H1 (cell line): ENCODE measurements at regions of chr20 and their contacts with region 1.

Region 1: GRCh38 chr20:39089029-39089428 is 126.9 kb downstream of the DHX35 start:
- DNase-seq: no peak
- H3K4me3 ChIP-seq: no peak overlapping the region
- H3K27ac ChIP-seq: no peak overlapping the region
- H3K4me1 ChIP-seq: 0 out of 7 replicates have a peak, but pooled peaks cover 0 to 2% (median 0%) of the 10 kb centered on the region in 4 experiments
- H3K27me3 ChIP-seq: peaks cover 0 to 2% (median 0%) of the 10 kb centered on the region in 4 experiments; a peak in 2 of 7 replicates
- CTCF ChIP-seq: no peak
- EP300 ChIP-seq: no peak
- POLR2A ChIP-seq: no peak
- RAD21 ChIP-seq: no peak

Region 2: DNA sequence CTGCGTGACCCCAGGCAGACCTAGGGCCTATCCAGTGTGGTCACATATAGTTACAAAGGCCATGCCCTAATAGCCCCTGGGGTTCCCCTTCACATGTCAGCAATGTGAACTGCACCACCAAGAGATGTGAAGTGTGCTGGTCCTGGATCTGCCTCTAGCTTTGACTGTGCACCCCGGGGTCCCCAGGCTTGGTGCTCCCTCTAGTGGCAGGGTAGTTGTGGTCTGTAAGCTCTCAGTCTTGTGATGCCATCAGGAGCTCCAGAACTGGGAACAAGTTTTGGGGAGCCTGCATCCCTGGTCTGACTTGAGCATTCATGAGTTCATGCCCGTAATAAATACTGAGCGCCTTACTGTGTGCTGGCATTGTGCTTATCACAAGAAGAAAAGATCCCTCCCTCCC is 16.5 kb after region 1 on chr20:
- CTCF ChIA-PET with region 1: interaction called, 30 read pairs
- POLR2A ChIA-PET with region 1: no interaction called
- DNase-seq: no peak
- H3K4me3 ChIP-seq: no peak overlapping the region
- H3K27ac ChIP-seq: no peak overlapping the region
- H3K4me1 ChIP-seq: peaks cover 0 to 9% (median 4%) of the 10 kb centered on the region in 4 experiments; a peak in 4 of 7 replicates
- H3K27me3 ChIP-seq: no peaks in the 10 kb centered on the region
- CTCF ChIP-seq: peak in 2 of 3 experiments; percentile 26 to 37; a peak in 2 of 4 replicates
- EP300 ChIP-seq: no peak
- POLR2A ChIP-seq: no peak
- RAD21 ChIP-seq: no peak

Region 3: DNA sequence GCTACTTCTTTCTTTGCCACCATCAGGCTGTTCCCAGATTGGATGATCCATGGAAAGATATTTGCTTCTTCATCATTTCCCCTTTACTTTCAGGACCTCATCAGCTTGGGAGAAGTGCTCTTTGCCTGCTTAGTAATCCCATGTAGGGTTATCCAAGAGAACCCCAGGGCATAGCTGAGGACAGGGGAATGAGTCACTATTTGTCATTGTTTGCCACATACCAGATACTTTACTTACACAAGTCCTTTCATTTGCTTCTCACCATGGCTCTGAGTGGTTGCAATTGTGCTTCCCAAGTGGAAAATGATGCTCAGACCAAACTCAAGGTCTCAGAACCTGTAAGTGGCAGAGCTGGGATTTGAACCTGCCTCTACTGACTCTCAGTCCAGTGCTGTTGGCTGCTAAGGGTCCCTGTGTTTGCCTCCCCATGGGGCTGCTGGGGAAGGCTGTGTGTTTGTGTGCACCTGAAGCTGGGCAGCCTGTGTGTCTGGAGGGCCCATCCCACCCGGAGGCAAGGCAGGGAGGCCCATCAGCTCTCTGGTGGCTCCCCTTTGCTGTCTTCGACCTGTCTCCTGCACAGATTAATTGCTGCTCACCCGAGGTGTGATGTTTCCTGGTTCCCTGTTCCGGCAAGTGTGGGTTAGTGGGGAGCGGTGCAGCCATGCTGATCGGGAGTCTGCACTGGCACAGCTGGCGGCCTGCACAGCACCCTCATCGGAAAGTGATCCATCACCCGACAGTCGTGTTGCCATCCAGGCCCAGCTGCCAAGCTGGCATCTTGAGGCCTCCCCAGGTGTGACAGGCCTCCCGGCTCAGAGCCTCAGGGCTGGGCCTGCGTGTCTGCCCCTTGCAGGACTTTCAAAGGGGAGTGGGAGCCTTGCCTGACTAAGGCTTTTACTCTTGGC is 101.9 kb after region 1 on chr20:
- CTCF ChIA-PET with region 1: no interaction called
- POLR2A ChIA-PET with region 1: no interaction called
- DNase-seq: peak in 1 of 2 experiments; percentile 38
- H3K4me3 ChIP-seq: no peak overlapping the region
- H3K27ac ChIP-seq: no peak overlapping the region
- H3K4me1 ChIP-seq: peaks cover 0 to 2% (median 0%) of the 10 kb centered on the region in 4 experiments; a peak in 1 of 7 replicates
- H3K27me3 ChIP-seq: no peaks in the 10 kb centered on the region
- CTCF ChIP-seq: no peak
- EP300 ChIP-seq: no peak
- POLR2A ChIP-seq: no peak
- RAD21 ChIP-seq: no peak